ENCODE measurements at regions of chr5 and their contacts with region 1.

Region 1: DNA sequence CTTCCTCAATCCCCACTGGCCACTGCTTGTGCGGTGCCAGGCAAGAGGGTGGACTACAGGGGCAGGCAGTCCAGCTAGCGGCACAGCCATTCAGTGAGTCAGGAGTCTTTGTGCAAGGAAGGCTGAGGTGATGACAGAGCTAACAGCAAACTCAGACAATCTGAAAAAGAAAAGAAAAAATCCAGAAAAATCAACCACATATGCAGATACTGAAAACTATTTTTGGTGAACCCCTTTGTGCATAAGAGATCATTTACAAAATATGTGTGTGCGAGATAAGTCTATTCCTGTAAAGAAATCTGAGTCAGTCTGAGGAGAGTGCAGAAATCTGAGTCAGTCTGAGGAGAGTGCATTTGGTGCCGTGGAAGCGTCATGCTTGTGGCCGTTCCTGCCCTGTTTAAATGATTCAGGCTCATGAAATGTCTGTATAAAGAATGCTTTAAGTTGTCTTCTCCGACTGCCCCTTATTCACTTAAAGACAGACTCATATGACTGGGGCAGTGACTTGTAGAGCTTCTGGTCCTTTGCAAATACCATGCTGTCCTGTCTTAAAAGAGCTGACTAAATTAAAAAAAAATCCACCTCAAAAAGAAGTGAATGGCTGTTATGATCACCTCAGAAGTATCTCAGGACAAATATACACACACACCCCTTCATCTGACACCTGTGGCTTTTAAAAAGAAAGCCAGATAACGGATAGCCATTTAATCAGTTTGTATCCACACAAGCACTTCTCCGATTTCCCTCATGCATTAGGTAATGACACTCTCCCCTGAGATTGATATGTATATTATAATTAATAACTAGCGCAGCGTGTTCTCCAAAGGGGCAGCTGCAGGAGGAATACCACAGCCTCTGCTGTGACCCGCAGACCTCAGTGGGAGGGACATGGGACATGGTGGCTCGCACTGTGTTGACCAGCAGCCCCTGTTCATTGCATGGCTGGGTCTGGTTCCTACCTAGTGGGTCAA is 47.3 kb downstream of the TRIO start:
- DNase-seq: peak; percentile 99
- ATAC-seq: peak; percentile 83
- H3K4me3 ChIP-seq: no peak overlapping the region
- H3K27ac ChIP-seq: peak overlapping the region; percentile 99
- H3K4me1 ChIP-seq: peaks cover 29% of the 10 kb centered on the region
- H3K27me3 ChIP-seq: no peaks in the 10 kb centered on the region
- CTCF ChIP-seq: no peak
- POLR2A ChIP-seq: peak; percentile 51; the same call in 1 of the 2 replicates
- RAD21 ChIP-seq: peak; percentile 25

Region 2: DNA sequence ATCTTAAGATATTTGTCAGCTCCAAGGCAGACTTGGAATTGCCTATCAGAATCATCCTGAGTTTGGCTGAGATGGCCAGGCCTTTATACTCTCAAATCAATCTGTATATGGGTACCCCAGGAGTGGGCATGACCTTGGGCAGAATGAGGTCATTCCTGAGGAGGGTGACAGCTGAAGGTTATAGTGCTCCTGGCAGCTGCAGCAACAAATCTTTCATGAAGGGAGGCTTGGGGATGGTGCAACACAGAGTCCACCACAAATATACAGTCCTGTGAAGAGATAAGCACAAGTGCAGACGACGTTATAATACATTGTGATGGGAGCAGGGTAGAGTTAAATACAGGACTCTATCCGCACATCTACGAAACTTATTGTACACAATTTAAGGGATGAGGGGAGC is 68.4 kb before region 1 on chr5:
- CTCF ChIA-PET with region 1: no interaction called
- POLR2A ChIA-PET with region 1: interaction called, 10 read pairs
- dilution Hi-C with region 1: no loop called
- in situ Hi-C with region 1: no loop called
- intact Hi-C with region 1: no loop called
- DNase-seq: no peak
- ATAC-seq: no peak
- H3K4me3 ChIP-seq: no peak overlapping the region
- H3K27ac ChIP-seq: no peak overlapping the region
- H3K4me1 ChIP-seq: no peaks in the 10 kb centered on the region
- H3K27me3 ChIP-seq: 0 out of 2 replicates have a peak, but pooled peaks cover 2% of the 10 kb centered on the region
- CTCF ChIP-seq: no peak
- POLR2A ChIP-seq: no peak
- RAD21 ChIP-seq: no peak

Region 3: GRCh38 chr5:14156650-14157493 is 33.6 kb before region 1 on chr5:
- CTCF ChIA-PET with region 1: interaction called, 7 read pairs
- POLR2A ChIA-PET with region 1: interaction called, 3 read pairs
- dilution Hi-C with region 1: no loop called
- in situ Hi-C with region 1: no loop called
- intact Hi-C with region 1: loop called (anchors 5 kb)
- DNase-seq: peak; percentile 99
- ATAC-seq: peak; percentile 75
- H3K4me3 ChIP-seq: peak overlapping the region; percentile 38
- H3K27ac ChIP-seq: peak overlapping the region; percentile 96
- H3K4me1 ChIP-seq: peaks cover 43% of the 10 kb centered on the region
- H3K27me3 ChIP-seq: no peaks in the 10 kb centered on the region
- CTCF ChIP-seq: no peak
- POLR2A ChIP-seq: no peak
- RAD21 ChIP-seq: peak; percentile 11; the same call in 1 of the 2 replicates

Region 4: GRCh38 chr5:14270209-14270702 is 79.8 kb after region 1 on chr5:
- CTCF ChIA-PET with region 1: interaction called, 4 read pairs
- POLR2A ChIA-PET with region 1: no interaction called
- dilution Hi-C with region 1: no loop called
- in situ Hi-C with region 1: no loop called
- intact Hi-C with region 1: loop called (anchors 5 kb)
- DNase-seq: peak; percentile 64
- ATAC-seq: peak; percentile 52
- H3K4me3 ChIP-seq: no peak overlapping the region
- H3K27ac ChIP-seq: peak overlapping the region; percentile 89
- H3K4me1 ChIP-seq: peaks cover 34% of the 10 kb centered on the region
- H3K27me3 ChIP-seq: no peaks in the 10 kb centered on the region
- CTCF ChIP-seq: peak; percentile 76
- POLR2A ChIP-seq: no peak
- RAD21 ChIP-seq: peak; percentile 71